Naive thymus-derived CD8-positive, alpha-beta T cell (primary cell): ENCODE measurements at regions of chr6 and their contacts with region 1.

Region 1: DNA sequence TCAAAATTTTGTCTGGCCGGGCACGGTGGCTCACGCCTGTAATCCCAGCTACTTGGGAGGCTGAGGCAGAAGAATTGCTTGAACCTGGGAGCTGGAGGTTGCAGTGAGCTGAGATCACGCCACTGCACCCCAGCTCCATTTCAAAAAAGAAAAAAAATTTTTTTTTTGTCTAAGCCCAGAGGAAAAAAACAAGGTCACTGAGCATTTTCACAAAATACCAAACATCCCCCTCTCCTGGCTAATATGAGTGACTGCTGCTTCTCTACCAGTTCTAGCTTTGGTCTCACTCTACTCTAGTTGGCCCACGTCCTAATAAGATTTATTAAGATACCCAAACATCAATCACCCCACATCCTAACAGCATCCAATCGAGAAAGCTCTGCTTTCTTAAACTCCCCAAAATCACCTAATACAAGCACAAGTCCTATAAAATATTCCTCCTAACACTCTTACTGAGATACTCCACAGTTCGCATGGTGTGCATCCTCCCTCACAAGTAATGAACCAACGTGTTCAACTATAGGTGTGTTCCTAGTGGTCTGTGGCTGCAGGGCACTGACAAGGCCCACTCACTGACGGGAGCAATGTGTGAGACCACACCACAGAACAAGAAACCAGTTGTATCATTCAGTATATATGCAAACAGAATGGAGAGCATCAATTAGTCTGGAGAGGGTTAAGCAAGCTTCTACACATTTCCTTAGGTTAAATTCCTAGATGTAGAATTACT is 64.2 kb downstream of the FKBP5 start:
- DNase-seq: peak in 4 of 10 donors; percentile 29 to 72 (median 66)
- ATAC-seq: peak; percentile 77 to 87
- H3K4me3 Mint-ChIP-seq: peak overlapping the region in 8 of 10 donors; percentile 7 to 52 (median 34)
- H3K27ac Mint-ChIP-seq: peak overlapping the region; percentile 76 to 93 (median 84)
- H3K4me1 Mint-ChIP-seq: peaks cover 15 to 61% (median 49%) of the 10 kb centered on the region in 4 donors
- H3K27me3 Mint-ChIP-seq: no peaks in the 10 kb centered on the region

Region 2: GRCh38 chr6:35583893-35584688 is 40.4 kb before region 1 on chr6:
- POLR2A ChIA-PET with region 1: interaction called, 127 read pairs
- DNase-seq: peak; percentile 58 to 85 (median 74)
- ATAC-seq: peak; percentile 66 to 69
- H3K4me3 Mint-ChIP-seq: peak overlapping the region in 7 of 10 donors; percentile 30 to 65 (median 57)
- H3K27ac Mint-ChIP-seq: peak overlapping the region; percentile 87 to 95 (median 90)
- H3K4me1 Mint-ChIP-seq: peaks cover 30 to 77% (median 60%) of the 10 kb centered on the region in 4 donors
- H3K27me3 Mint-ChIP-seq: no peaks in the 10 kb centered on the region

Region 3: DNA sequence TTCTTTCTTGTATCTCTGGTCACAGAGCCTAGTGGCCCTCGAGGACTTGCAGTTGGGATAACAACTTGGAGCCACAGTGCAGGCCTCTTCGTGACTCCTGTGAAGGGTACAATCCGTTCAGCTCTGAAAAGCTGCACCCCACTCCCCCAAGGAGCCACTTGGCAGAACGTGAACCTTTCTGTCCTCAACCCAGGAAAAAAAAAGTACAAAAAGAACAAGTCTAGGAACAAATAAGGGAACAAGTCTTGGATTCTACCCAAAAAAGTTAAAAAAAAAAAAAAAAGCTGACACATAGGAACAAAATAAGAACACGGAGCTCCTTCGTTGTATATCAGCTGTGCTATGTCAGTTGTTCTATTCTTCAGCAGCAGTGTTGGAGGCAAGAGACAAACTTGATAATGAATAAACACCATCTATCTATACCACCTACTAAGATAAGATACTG is 33.9 kb before region 1 on chr6:
- POLR2A ChIA-PET with region 1: interaction called, 127 read pairs
- DNase-seq: no peak
- ATAC-seq: no peak
- H3K4me3 Mint-ChIP-seq: peak overlapping the region in 9 of 10 donors; percentile 22 to 69 (median 44)
- H3K27ac Mint-ChIP-seq: peak overlapping the region; percentile 78 to 96 (median 94)
- H3K4me1 Mint-ChIP-seq: peaks cover 32 to 96% (median 91%) of the 10 kb centered on the region in 4 donors
- H3K27me3 Mint-ChIP-seq: no peaks in the 10 kb centered on the region